OCI-LY7 (cell line): ENCODE measurements at regions of chr10 and their contacts with region 1.

Region 1: GRCh38 chr10:87861953-87862678 is 1.2 kb downstream of the KLLN start:
- DNase-seq: peak; percentile 99
- H3K4me3 ChIP-seq: peak overlapping the region; percentile 96
- H3K27ac ChIP-seq: peak overlapping the region; percentile 94
- H3K4me1 ChIP-seq: peaks cover 19% of the 10 kb centered on the region
- CTCF ChIP-seq: no peak; the same call in 1 of the 2 replicates

Region 2: GRCh38 chr10:86876748-86877147 is 985.4 kb before region 1 on chr10:
- CTCF ChIA-PET with region 1: no interaction called
- POLR2A ChIA-PET with region 1: no interaction called
- intact Hi-C with region 1: no loop called
- DNase-seq: no peak
- H3K4me3 ChIP-seq: no peak overlapping the region
- H3K27ac ChIP-seq: no peak overlapping the region
- H3K4me1 ChIP-seq: no peaks in the 10 kb centered on the region
- CTCF ChIP-seq: no peak

Region 3: DNA sequence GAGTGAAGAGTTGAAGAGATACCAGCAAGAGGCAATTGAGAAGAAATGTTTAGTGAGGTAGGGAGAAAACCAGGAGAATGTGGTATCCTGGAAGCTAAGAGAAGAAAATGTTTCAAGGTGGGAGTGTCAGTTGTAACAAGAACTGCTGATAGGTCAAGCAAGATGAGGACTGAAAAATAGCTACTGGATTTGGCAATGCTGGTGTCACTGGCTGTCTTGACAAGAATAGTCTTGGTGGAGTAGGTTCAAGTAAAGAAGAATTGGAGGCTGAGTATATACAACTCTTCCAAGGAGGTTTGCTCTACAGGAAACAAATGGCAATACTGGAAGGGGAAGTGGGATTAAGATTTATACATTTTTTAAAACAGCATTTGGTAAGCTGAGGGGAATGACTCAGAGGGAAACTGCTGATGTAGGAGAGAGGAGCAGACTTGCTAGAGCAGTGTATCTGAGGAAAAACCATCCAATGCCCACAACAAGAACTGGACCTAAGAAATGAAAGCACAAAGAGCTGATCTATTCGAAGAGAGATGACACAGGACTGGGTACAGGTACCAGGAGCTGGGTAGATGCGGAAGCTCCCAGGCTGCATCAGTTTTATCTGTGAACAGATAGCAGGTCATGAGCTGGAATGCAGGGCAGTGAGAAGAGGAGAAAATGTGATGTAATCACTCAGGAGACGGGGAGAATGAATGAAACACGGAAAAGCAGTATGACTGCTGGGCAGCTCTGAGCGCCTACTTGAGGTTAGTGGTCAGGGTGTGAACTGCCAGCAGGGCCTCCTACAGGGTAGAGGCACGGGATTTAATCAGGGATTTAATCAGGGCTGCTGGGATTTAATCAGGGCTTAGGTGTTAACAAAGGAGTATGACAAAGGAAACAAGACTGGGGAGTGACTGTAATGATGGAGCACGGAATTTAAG is 807.5 kb before region 1 on chr10:
- CTCF ChIA-PET with region 1: no interaction called
- POLR2A ChIA-PET with region 1: no interaction called
- intact Hi-C with region 1: no loop called
- DNase-seq: no peak
- H3K4me3 ChIP-seq: no peak overlapping the region
- H3K27ac ChIP-seq: no peak overlapping the region
- H3K4me1 ChIP-seq: no peaks in the 10 kb centered on the region
- CTCF ChIP-seq: no peak

Region 4: GRCh38 chr10:87875929-87876571 is 13.9 kb after region 1 on chr10:
- CTCF ChIA-PET with region 1: no interaction called
- POLR2A ChIA-PET with region 1: interaction called, 30 read pairs
- intact Hi-C with region 1: no loop called
- DNase-seq: no peak
- H3K4me3 ChIP-seq: no peak overlapping the region
- H3K27ac ChIP-seq: no peak overlapping the region
- H3K4me1 ChIP-seq: peaks cover 42% of the 10 kb centered on the region
- CTCF ChIP-seq: no peak

Region 5: DNA sequence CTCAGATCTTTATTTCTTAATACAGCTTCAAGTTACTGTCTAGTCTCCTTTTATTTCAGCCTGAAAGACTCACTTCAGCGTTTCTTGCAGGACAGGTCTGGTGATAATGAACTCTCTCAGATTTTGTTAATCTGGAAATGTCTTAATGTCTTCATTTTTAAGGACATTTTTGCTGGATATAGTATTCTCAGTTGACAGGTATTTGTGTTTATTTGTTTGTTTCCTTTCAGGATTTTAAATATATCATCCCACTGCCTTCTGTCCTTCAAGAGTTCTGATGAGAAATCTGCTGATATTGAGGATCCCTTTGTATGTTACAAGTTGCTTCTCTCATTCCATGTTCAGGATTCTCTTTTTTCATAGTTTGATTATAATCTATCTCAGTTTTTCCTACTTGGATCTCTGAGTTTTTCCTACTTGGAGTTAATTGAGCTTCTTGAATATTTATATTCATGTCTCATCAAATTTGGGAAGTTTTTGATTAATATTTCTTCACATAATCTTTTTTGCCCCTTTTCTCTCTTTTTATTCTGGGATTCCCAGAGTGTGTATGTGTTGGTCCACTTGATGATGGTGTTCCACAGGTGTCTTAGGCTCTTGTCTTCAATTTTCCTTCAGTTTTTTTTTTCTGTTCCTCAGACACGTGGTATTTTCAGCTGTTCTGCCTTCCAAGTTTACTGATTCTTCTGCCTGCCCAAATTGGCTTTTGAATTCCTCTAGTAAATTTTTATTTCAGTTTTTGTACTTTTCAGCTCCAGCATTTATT is 51.2 kb after region 1 on chr10:
- CTCF ChIA-PET with region 1: no interaction called
- POLR2A ChIA-PET with region 1: no interaction called
- intact Hi-C with region 1: no loop called
- DNase-seq: no peak
- H3K4me3 ChIP-seq: no peak overlapping the region
- H3K27ac ChIP-seq: no peak overlapping the region
- H3K4me1 ChIP-seq: peaks cover 36% of the 10 kb centered on the region
- CTCF ChIP-seq: no peak

Region 6: DNA sequence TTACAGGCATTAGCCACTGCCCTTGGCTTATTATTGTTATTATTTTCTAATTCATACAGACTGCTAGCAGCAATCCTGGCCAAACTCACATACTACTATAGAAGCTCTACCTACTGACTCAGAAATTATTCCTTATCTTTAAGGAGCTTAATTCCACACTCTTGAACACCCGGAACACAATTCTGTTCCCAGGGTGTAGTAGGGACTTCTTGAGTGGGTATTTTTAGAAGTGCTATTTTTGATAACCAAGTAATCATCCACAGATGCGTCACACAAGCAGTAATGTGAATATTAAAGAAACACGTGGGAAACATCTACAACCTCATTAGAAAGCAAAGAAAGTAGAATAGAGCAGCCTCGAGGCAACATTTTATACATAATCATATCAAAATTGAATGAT is 150.5 kb after region 1 on chr10:
- CTCF ChIA-PET with region 1: no interaction called
- POLR2A ChIA-PET with region 1: no interaction called
- intact Hi-C with region 1: no loop called
- DNase-seq: no peak
- H3K4me3 ChIP-seq: no peak overlapping the region
- H3K27ac ChIP-seq: no peak overlapping the region
- H3K4me1 ChIP-seq: no peaks in the 10 kb centered on the region
- CTCF ChIP-seq: no peak

Region 7: DNA sequence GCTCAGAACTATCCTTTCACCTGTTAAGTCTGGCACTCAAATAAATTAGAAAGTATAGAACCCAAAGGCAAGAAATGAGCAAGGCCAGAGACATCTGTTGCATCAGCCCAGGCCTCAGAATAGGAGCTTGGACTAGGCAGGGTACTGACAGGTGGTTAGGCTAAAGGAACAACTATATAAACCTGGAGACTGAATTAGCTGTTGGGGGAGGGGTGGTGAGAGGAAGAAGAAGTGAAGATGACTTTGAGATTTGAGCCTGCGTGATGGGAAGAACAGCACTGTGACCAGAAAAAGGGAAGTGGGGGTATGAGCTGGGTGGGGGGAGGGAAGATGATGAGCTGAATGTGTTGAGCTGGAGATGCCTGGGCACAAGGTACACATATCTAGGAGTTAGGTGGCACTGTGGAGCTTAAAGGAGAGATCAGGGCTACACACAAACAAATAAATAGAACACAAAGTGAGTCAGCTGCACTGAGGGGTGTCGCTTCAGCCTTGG is 246.0 kb after region 1 on chr10:
- CTCF ChIA-PET with region 1: interaction called, 12 read pairs
- POLR2A ChIA-PET with region 1: interaction called, 50 read pairs
- intact Hi-C with region 1: loop called (anchors 1 kb)
- DNase-seq: peak; percentile 99
- H3K4me3 ChIP-seq: peak overlapping the region; percentile 31
- H3K27ac ChIP-seq: peak overlapping the region; percentile 96
- H3K4me1 ChIP-seq: peaks cover 94% of the 10 kb centered on the region
- CTCF ChIP-seq: peak; percentile 85

Region 8: DNA sequence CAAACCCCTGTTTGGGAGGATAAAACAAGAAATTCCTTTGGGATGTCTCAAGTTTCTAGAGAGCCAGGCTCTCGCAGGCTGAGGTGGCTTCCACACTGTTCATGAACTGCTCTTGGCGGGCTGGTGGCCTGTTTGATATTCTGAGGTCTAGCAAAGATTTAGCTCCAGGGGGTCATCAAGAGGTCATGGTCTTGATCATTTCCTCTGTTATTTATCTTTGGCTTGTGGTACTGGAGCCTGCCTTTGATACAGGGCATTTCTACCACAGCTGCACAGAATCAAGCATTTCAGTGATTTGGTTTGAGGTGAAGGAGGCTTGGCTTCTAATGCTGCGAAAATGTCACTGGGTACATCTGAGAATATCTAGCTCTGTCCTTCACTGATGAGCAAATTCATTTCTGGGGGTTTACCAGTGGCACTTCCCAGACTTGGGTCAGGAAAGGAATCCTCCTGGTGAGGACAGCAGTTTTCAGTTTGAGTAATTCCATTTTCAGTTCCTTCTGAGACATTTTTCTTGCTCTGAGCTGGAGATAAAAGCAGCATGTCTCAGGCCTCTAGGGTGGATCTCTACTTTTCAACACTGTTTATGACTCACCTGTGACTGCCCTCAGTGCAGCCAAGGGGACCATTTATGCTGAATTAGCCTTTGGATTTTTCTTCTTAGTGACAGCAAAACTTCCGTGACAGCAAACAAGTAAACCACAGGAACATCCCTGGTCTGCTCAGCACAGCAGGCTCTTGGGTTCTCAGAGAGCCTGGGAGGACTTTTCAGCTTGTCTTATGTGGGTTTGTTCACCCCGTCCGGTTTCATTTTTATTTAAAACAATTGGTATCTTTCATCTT is 409.0 kb after region 1 on chr10:
- CTCF ChIA-PET with region 1: no interaction called
- POLR2A ChIA-PET with region 1: no interaction called
- intact Hi-C with region 1: loop called (anchors 5 kb)
- DNase-seq: peak; percentile 30
- H3K4me3 ChIP-seq: no peak overlapping the region
- H3K27ac ChIP-seq: peak overlapping the region; percentile 11
- H3K4me1 ChIP-seq: peaks cover 31% of the 10 kb centered on the region
- CTCF ChIP-seq: no peak

Region 9: DNA sequence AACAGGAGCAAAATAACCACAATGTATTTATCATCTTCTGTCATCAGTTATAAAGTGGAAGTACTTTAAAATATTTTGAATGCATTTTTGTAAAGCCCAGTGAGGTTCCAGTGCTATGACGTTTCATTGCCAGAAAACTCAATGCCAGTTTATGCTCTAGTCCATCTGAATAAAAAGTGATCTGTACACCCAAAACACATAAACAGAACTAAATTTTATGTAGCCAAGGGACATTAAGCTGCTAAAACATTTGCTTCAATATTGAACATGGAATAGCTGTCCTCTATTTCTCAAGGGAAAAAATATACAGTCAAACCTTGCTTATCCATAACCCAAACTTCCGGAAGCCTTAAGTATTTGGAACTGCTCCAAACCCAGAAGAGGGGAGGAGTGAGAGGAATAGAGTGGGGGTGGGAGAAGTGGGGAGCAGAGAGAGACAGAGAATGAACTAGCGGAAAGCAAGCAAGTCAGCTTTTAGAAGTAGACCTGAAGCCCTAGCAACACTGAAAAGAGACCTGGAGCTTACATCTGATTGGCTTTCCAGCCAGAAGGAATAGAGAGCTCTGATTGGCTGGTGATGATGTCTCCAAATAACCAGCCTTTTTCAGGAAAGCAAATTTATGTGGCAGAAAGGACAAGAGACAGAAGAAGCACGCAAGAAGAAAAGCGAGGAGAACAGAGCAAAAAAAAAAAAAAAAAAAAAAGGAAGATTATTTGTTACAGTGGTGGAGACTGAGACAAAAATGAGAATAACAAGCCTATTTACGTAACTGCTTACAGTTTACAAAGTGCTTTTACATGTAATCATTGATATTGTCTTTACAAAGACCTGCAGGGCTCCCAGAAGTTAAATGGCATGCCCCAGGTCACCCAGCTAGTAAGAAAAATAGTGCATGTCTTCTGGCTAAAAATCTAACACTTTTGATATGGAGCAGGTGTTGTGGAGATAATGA is 525.0 kb after region 1 on chr10:
- CTCF ChIA-PET with region 1: interaction called, 36 read pairs
- POLR2A ChIA-PET with region 1: interaction called, 134 read pairs
- intact Hi-C with region 1: loop called (anchors 1 kb)
- DNase-seq: peak; percentile 91
- H3K4me3 ChIP-seq: peak overlapping the region; percentile 65
- H3K27ac ChIP-seq: peak overlapping the region; percentile 99
- H3K4me1 ChIP-seq: peaks cover 85% of the 10 kb centered on the region
- CTCF ChIP-seq: no peak

Region 10: DNA sequence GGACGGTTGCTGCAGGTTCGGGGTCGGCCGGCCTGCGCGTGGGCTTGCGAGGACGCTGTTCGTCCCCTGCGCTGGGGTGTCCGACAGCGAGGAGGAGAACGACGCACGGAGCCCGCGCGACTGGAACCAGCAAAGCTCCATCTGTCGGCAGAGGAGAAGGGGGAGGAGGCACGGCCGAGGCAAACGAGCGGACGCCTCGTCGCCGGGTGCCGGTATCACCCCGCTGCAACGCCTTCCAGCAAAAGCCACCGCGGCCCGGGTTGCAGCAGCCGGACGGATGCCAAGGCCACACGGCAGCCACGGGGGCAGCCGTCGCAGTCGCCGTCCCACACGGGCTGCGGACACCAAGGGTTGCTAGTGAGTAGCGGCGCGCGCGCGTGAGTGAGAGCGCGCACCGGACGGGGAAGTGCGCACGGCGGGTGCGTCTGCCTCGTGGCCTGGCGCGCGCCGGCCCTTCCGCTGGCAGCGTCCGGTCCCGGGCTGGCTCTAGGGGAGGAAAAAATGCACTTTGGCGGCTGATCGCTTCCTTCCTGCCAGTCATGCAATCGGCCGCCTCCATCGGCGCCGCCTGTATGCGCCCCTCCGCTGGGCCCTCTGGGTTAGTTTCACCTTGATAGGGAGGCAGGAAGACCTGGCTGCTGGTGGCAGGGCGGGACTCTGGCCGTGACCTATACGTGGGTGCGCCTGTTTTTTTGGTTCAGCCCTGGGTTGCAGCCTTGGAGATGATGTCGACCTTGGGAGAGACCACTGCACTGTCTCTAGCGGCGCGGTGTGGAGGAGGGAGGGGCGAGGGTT is 1018.4 kb after region 1 on chr10:
- CTCF ChIA-PET with region 1: no interaction called
- POLR2A ChIA-PET with region 1: no interaction called
- intact Hi-C with region 1: loop called (anchors 1 kb)
- DNase-seq: peak; percentile 91
- H3K4me3 ChIP-seq: peak overlapping the region; percentile 80
- H3K27ac ChIP-seq: peak overlapping the region; percentile 93
- H3K4me1 ChIP-seq: peaks cover 64% of the 10 kb centered on the region
- CTCF ChIP-seq: peak; percentile 43; the same call in 1 of the 2 replicates